ENCODE measurements at regions of chr9 and their contacts with region 1.

Region 1: GRCh38 chr9:104482921-104483570 is 21.0 kb upstream of the OR13F1 start:
- DNase-seq: no peak
- ATAC-seq: no peak
- H3K4me3 ChIP-seq: no peak overlapping the region
- H3K27ac ChIP-seq: no peak overlapping the region
- H3K4me1 ChIP-seq: no peaks in the 10 kb centered on the region
- H3K27me3 ChIP-seq: no peaks in the 10 kb centered on the region
- CTCF ChIP-seq: no peak
- POLR2A ChIP-seq: no peak

Region 2: DNA sequence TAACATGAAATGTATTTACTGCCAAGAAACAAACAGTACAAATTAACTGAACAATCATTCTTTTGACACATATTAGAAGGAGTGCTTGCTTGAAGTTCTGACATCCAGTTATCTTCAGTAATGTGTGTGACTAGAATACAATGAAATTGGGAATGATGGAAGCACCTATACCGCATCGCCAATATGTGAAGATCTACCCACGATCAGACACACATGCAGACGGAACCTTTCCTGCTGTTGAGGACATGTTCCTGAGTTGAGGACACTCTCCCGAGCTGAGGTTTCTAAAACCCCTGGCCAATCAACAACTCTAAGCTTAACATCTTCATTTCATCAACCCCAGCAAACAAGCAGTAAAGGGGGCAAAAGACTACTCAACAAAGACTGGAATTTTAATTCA is 53.7 kb after region 1 on chr9 and contains the start of gene OR13C3:
- in situ Hi-C with region 1: loop called in 1 of 4 experiments (anchors 10 kb)
- intact Hi-C with region 1: no loop called
- DNase-seq: no peak
- ATAC-seq: no peak
- H3K4me3 ChIP-seq: no peak within 1 kb of the TSS
- H3K27ac ChIP-seq: no peak within 1 kb of the TSS
- H3K4me1 ChIP-seq: no peaks in the 10 kb centered on the region
- H3K27me3 ChIP-seq: no peaks in the 10 kb centered on the region
- CTCF ChIP-seq: no peak
- POLR2A ChIP-seq: no peak
- total RNA-seq, gene OR13C3: not detected